HEK293 (cell line): ENCODE measurements at regions of chr13 and their contacts with region 1.

Region 1: DNA sequence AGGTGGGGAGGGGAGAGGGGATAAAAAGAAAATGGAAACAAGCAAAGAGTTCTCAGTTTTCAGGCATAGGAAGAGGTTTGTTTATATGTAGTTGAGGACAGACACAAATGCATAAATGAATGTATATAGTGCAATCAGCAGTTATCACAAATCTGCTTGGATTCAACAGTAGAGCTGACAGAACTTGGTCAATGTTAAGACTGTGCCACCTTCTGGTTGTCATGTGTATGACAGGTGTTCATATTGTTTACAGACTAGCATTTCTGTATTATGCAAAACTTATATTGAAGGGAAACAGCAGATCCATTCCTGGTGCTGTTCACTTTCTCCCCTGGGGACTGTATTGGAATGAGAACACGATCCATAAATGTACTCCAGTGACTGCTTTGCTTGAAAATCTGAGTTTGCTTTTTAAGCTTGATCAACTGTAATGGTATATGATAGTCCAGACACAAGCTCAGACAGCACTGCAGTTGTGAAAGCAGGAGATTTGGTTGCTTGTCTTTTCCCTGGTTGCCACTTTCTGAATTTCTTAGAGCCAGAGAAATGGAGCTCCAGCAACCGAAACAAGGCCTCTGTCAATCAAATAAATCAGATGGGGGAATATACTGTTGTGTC is 319.5 kb upstream of the OBI1 start:
- H3K4me3 ChIP-seq: no peak overlapping the region
- H3K27ac ChIP-seq: no peak overlapping the region
- H3K4me1 ChIP-seq: no peaks in the 10 kb centered on the region
- CTCF ChIP-seq: no peak

Region 2: GRCh38 chr13:78137404-78138142 is 840.9 kb before region 1 on chr13:
- CTCF ChIA-PET with region 1: interaction called, 18 read pairs
- POLR2A ChIA-PET with region 1: no interaction called
- H3K4me3 ChIP-seq: no peak overlapping the region; the same call in 1 of the 2 replicates
- H3K27ac ChIP-seq: no peak overlapping the region
- H3K4me1 ChIP-seq: no peaks in the 10 kb centered on the region
- CTCF ChIP-seq: peak; percentile 49

Region 3: GRCh38 chr13:78241278-78241919 is 737.1 kb before region 1 on chr13:
- CTCF ChIA-PET with region 1: interaction called, 21 read pairs
- POLR2A ChIA-PET with region 1: no interaction called
- H3K4me3 ChIP-seq: no peak overlapping the region
- H3K27ac ChIP-seq: no peak overlapping the region
- H3K4me1 ChIP-seq: no peaks in the 10 kb centered on the region
- CTCF ChIP-seq: no peak